Activated naive CD4-positive, alpha-beta T cell treated with anti-CD3 and anti-CD28 coated beads for 36 hours (primary cell): ENCODE measurements at regions of chr7 and their contacts with region 1.

Region 1: DNA sequence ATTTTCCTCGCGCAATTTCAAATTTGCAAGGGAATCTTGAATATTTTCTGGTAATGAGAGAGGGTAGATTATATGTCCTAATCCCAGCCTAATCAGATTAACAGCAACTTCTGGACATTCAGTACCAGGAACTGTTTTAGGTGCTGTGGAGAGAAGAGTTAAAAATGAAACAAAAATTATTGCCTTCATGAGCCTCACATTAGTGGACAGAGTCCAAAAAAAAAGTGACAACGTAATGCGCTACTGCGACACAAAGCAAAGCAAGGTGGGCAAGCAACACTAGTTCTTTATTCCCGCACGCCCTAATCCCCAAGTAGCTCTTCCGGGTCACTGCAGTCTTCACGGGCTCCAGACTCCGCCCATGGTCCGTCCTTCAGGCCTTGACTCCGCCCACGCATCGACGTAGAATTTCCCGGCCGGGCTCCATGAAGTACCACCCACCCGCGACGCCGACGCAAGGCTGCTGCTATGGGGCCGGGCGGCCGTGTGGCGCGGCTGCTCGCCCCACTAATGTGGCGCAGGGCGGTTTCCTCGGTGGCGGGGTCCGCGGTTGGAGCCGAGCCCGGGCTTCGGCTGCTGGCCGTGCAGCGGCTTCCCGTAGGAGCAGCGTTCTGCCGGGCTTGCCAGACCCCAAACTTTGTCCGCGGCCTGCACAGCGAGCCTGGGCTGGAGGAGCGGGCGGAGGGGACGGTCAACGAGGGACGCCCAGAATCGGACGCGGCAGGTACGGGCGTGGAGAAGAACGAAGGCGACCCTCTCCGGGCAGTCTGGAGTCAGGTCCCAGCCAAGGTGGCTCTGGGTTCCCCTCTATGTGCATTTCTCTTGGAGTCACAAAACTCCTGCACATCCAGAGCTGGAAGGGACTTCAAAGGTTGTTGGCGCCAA is at the start of gene MALSU1:
- DNase-seq: peak; percentile 99
- H3K4me3 Mint-ChIP-seq: peak within 1 kb of the TSS; percentile 96
- H3K27ac Mint-ChIP-seq: peak within 1 kb of the TSS; percentile 95
- H3K4me1 Mint-ChIP-seq: peaks cover 30% of the 10 kb centered on the region
- H3K27me3 Mint-ChIP-seq: no peaks in the 10 kb centered on the region
- total RNA-seq, gene MALSU1: 98.4 to 101 TPM

Region 2: DNA sequence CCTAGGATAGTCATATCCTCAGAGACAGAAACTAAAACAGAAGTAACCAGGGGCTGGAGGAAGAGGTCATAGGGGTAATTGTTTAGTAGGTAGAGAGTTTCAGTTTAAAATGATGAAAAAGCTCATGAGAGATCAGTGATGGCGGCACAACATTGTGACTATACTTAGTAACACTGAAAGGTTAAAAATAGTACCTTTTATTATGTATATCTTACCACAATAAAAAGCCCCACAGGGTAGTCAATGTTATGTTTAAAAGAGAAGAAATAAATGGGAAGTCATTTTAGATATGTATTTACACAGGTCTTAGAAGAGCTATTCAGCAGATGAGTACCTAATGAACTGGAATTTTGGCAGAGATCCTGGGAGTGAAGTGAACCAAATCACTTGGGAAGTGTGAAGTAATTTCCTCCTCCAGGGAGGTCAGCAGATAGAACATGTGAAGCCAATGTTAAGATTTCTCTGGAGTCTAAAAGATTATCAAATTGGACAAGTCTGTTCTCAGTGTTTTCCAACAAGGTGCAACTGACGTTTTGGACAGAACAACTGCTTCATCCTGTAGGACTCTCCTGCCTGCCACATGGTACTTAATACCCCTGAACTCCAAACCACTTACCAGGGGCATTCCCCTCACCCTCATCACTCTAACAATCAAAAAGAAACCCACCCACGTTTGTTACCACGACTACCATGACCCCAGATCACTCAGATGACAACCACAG is 1359.8 kb before region 1 on chr7:
- CTCF ChIA-PET with region 1: no interaction called
- intact Hi-C with region 1: loop called (anchors 1 kb)
- DNase-seq: peak; percentile 84
- H3K4me3 Mint-ChIP-seq: peak overlapping the region; percentile 13
- H3K27ac Mint-ChIP-seq: peak overlapping the region; percentile 77
- H3K4me1 Mint-ChIP-seq: peaks cover 72% of the 10 kb centered on the region
- H3K27me3 Mint-ChIP-seq: no peaks in the 10 kb centered on the region

Region 3: GRCh38 chr7:22885797-22886261 is 413.3 kb before region 1 on chr7:
- CTCF ChIA-PET with region 1: no interaction called
- intact Hi-C with region 1: loop called (anchors 1 kb)
- DNase-seq: peak; percentile 88
- H3K4me3 Mint-ChIP-seq: peak overlapping the region; percentile 64
- H3K27ac Mint-ChIP-seq: peak overlapping the region; percentile 98
- H3K4me1 Mint-ChIP-seq: peaks cover 54% of the 10 kb centered on the region
- H3K27me3 Mint-ChIP-seq: no peaks in the 10 kb centered on the region

Region 4: DNA sequence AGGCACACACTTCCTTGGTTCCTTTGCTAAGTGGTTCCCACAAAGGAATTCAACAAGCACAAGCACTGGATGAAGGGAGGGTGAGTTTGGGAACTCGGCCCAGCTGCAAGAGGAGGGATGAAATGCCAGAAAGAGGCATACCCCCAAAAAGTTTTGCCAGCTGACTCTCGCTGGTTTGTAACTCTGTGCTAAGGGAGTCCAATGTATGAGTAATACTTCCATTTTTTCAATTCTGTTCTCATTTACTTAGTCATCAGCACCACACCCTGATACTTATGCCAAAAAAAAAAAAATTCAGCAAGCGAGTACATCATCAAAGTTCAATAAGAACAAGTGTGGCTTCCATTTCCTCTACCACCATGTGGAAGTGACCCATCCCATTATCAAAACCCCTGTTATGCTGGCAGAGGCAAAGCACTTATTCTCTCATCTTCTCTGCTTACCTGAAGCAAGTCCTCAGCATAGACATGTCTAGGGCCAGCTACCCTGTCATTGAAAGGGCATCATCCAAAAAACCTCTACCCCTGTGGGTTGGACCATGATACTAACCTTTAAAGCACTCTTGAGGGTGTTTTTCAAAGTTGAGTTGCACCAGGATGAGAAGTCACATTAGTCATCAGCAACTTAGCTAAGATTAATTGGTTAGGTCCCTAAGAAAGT is 278.3 kb before region 1 on chr7:
- CTCF ChIA-PET with region 1: no interaction called
- intact Hi-C with region 1: no loop called
- DNase-seq: peak; percentile 43
- H3K4me3 Mint-ChIP-seq: no peak overlapping the region
- H3K27ac Mint-ChIP-seq: peak overlapping the region; percentile 72
- H3K4me1 Mint-ChIP-seq: peaks cover 25% of the 10 kb centered on the region
- H3K27me3 Mint-ChIP-seq: peaks cover 9% of the 10 kb centered on the region

Region 5: DNA sequence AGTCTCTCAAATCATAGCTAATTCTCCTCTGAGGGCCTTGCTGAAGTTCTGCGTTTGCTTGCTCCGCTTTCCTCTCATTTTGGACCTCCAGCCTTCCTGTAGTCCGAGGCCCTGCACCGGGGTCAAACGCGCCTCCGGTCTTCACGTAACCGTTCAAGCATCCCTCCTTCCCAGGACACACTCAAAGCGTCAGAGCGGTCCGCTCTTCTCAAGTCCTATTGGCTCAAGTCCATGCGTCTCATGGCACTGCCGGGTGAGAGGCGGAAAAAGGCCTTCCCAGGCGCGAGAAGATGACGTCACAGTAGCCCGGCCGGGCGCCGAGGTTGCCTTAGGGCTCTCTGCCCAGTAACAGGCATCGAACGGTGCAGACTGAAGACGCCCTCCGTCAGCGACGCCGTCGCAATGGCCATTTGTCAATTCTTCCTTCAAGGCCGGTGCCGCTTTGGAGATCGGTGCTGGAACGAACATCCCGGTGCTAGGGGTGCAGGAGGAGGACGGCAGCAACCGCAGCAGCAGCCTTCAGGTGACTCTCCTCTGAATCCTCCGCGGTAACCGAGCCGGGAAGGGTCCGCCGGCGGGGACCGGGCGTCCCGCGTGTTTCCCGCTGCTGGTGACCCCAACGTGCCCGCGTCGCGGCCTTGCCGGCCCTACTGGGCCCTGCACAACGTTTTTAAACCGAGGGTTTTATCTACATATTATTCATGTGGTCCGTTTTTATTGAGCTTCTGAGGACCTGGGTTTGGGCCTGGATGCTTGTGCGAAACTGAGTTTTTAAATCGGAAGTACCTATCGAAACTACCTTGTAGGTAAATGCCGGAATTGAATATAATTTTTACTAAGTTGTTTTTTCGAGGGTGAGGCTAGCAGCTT is 117.2 kb before region 1 on chr7 and contains the start of gene NUP42:
- CTCF ChIA-PET with region 1: no interaction called
- intact Hi-C with region 1: loop called (anchors 1 kb)
- DNase-seq: peak; percentile 98
- H3K4me3 Mint-ChIP-seq: peak within 1 kb of the TSS; percentile 99
- H3K27ac Mint-ChIP-seq: peak within 1 kb of the TSS; percentile 99
- H3K4me1 Mint-ChIP-seq: peaks cover 35% of the 10 kb centered on the region
- H3K27me3 Mint-ChIP-seq: no peaks in the 10 kb centered on the region
- total RNA-seq, gene NUP42: 15.2 to 17.0 TPM

Region 6: GRCh38 chr7:23347682-23348180 is 48.6 kb after region 1 on chr7:
- CTCF ChIA-PET with region 1: interaction called, 6 read pairs
- intact Hi-C with region 1: loop called (anchors 1 kb)
- DNase-seq: peak; percentile 20
- H3K4me3 Mint-ChIP-seq: peak overlapping the region; percentile 8
- H3K27ac Mint-ChIP-seq: peak overlapping the region; percentile 64
- H3K4me1 Mint-ChIP-seq: peaks cover 32% of the 10 kb centered on the region
- H3K27me3 Mint-ChIP-seq: no peaks in the 10 kb centered on the region

Region 7: DNA sequence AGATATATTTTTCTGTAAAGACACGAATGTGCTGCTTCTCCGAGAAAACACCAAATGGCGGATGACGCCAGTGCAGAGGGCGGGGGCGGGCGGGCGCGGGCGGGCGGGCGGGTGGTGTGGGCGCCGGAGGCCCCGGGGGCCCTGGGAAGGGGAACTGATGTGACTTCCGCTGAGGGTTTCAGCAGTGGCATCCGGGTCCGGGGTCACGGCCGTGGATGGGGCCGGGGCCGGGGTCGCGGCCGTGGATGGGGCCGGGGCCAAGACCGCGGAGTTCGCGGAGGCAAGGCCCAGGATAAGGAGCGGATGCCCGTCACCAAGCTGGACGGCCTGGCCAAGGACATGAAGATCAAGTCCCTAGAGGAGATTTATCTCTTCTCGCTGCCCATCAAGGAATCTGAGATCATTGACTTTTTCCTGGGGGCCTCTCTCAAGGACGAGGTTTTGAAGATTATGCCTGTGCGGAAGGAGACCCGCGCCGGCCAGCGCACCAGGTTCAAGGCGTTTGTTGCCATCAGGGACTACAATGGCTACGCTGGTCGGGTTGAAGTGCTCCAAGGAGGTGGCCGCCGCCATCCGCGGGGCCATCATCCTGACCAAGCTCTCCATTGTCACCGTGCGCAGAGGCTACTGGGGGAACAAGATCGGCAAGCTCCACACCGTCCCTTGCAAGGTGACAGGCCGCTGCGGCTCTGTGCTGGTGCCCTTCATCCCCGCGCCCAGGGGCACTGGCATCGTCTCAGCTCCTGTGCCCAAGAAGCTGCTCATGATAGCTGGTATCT is 191.4 kb after region 1 on chr7:
- CTCF ChIA-PET with region 1: interaction called, 3 read pairs
- intact Hi-C with region 1: loop called (anchors 1 kb)
- DNase-seq: peak; percentile 69
- H3K4me3 Mint-ChIP-seq: peak overlapping the region; percentile 81
- H3K27ac Mint-ChIP-seq: peak overlapping the region; percentile 81
- H3K4me1 Mint-ChIP-seq: peaks cover 2% of the 10 kb centered on the region
- H3K27me3 Mint-ChIP-seq: no peaks in the 10 kb centered on the region